ENCODE measurements at regions of chr4 and their contacts with region 1.

Region 1: GRCh38 chr4:78864405-78865024 is 74.7 kb downstream of the PAQR3 start:
- DNase-seq: peak; percentile 64
- ATAC-seq: peak; percentile 52; the same call in 1 of the 2 replicates
- H3K4me3 ChIP-seq: no peak overlapping the region
- H3K27ac ChIP-seq: no peak overlapping the region
- H3K4me1 ChIP-seq: no peaks in the 10 kb centered on the region
- H3K27me3 ChIP-seq: no peaks in the 10 kb centered on the region
- CTCF ChIP-seq: peak; percentile 52 to 73 (median 59); a peak in 5 of 6 replicates
- POLR2A ChIP-seq: no peak
- RAD21 ChIP-seq: peak; percentile 77

Region 2: GRCh38 chr4:77959566-77960338 is 904.8 kb before region 1 on chr4:
- CTCF ChIA-PET with region 1: no interaction called
- POLR2A ChIA-PET with region 1: no interaction called
- RAD21 ChIA-PET with region 1: no interaction called
- intact Hi-C with region 1: loop called (anchors 5 kb)
- DNase-seq: peak; percentile 51
- ATAC-seq: peak; percentile 54
- H3K4me3 ChIP-seq: no peak overlapping the region
- H3K27ac ChIP-seq: no peak overlapping the region
- H3K4me1 ChIP-seq: no peaks in the 10 kb centered on the region
- H3K27me3 ChIP-seq: no peaks in the 10 kb centered on the region
- CTCF ChIP-seq: peak; percentile 50 to 74 (median 59); a peak in 5 of 6 replicates
- POLR2A ChIP-seq: no peak
- RAD21 ChIP-seq: peak; percentile 79

Region 3: GRCh38 chr4:78517050-78517652 is 347.4 kb before region 1 on chr4:
- CTCF ChIA-PET with region 1: no interaction called
- POLR2A ChIA-PET with region 1: no interaction called
- RAD21 ChIA-PET with region 1: no interaction called
- intact Hi-C with region 1: loop called (anchors 10 kb)
- DNase-seq: no peak
- ATAC-seq: peak; percentile 76
- H3K4me3 ChIP-seq: no peak overlapping the region
- H3K27ac ChIP-seq: no peak overlapping the region
- H3K4me1 ChIP-seq: no peaks in the 10 kb centered on the region
- H3K27me3 ChIP-seq: no peaks in the 10 kb centered on the region
- CTCF ChIP-seq: peak; percentile 49 to 70 (median 64); a peak in 5 of 6 replicates
- POLR2A ChIP-seq: no peak
- RAD21 ChIP-seq: peak; percentile 77

Region 4: DNA sequence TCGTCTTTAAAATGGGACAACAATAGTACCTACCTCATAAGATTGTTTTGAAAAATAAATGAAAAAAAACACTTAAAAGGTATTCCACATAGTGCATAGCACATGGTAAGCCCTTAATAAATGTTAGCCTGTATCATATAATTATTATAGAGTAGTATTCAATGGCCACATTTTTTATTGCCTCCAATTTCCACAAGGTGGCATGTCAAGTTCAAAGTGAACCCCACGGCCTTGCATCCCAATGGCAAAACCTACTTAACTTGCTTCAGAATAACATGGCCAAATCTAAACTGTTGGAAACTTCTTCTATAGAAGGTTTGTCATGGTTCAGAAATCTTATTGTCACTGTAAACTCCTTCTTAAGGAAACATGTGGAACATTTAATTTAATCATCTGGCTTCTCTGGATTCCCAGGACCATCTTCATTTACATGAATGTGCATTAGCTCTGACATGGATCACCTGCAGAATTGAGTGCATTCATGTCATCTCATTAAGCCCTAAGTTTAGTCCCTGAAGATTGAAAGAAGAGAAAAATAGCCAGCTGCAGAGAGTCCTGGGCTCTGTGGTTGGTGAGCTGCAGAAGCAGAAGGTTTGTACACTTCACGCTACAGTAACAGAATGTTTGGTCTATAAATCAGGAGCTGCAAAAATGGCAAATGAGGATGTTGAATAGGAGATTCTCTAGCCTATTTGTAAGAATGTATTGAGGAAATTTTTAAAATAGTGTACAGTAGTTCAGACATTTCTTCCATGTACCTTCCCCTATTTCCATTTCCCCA is 251.9 kb before region 1 on chr4:
- CTCF ChIA-PET with region 1: interaction called, 5 read pairs
- POLR2A ChIA-PET with region 1: no interaction called
- RAD21 ChIA-PET with region 1: no interaction called
- intact Hi-C with region 1: loop called (anchors 1 kb)
- DNase-seq: no peak
- ATAC-seq: peak; percentile 75
- H3K4me3 ChIP-seq: no peak overlapping the region
- H3K27ac ChIP-seq: no peak overlapping the region
- H3K4me1 ChIP-seq: no peaks in the 10 kb centered on the region
- H3K27me3 ChIP-seq: no peaks in the 10 kb centered on the region
- CTCF ChIP-seq: peak; percentile 35 to 53 (median 48); a peak in 4 of 6 replicates
- POLR2A ChIP-seq: no peak
- RAD21 ChIP-seq: peak; percentile 70

Region 5: GRCh38 chr4:78644744-78645330 is 219.7 kb before region 1 on chr4:
- CTCF ChIA-PET with region 1: interaction called, 3 read pairs
- POLR2A ChIA-PET with region 1: no interaction called
- RAD21 ChIA-PET with region 1: no interaction called
- intact Hi-C with region 1: loop called (anchors 10 kb)
- DNase-seq: peak; percentile 49
- ATAC-seq: peak; percentile 90
- H3K4me3 ChIP-seq: no peak overlapping the region
- H3K27ac ChIP-seq: no peak overlapping the region
- H3K4me1 ChIP-seq: peaks cover 7 to 28% of the 10 kb centered on the region in 2 experiments
- H3K27me3 ChIP-seq: no peaks in the 10 kb centered on the region
- CTCF ChIP-seq: peak; percentile 39 to 92 (median 84); a peak in 5 of 6 replicates
- POLR2A ChIP-seq: no peak
- RAD21 ChIP-seq: peak; percentile 64